Ovary (tissue), 10 donors: ENCODE measurements at regions of chr4 and their contacts with region 1.

Region 1: GRCh38 chr4:65911720-65912119 is 241.4 kb upstream of the EPHA5 start:
- DNase-seq: no peak
- H3K4me3 ChIP-seq: no peak overlapping the region
- H3K27ac ChIP-seq: no peak overlapping the region
- H3K4me1 ChIP-seq: no peaks in the 10 kb centered on the region
- H3K27me3 ChIP-seq: no peaks in the 10 kb centered on the region
- CTCF ChIP-seq: no peak
- EP300 ChIP-seq: no peak
- POLR2A ChIP-seq: no peak

Region 2: GRCh38 chr4:65865489-65865888 is 46.2 kb before region 1 on chr4:
- intact Hi-C with region 1: loop called in 1 of 4 experiments (anchors 2 kb)
- DNase-seq: no peak
- H3K4me3 ChIP-seq: no peak overlapping the region
- H3K27ac ChIP-seq: no peak overlapping the region
- H3K4me1 ChIP-seq: no peaks in the 10 kb centered on the region
- H3K27me3 ChIP-seq: no peaks in the 10 kb centered on the region
- CTCF ChIP-seq: no peak
- EP300 ChIP-seq: no peak
- POLR2A ChIP-seq: no peak